Gastrocnemius medialis (tissue), 4 donors: ENCODE measurements at regions of chr12 and their contacts with region 1.

Region 1: DNA sequence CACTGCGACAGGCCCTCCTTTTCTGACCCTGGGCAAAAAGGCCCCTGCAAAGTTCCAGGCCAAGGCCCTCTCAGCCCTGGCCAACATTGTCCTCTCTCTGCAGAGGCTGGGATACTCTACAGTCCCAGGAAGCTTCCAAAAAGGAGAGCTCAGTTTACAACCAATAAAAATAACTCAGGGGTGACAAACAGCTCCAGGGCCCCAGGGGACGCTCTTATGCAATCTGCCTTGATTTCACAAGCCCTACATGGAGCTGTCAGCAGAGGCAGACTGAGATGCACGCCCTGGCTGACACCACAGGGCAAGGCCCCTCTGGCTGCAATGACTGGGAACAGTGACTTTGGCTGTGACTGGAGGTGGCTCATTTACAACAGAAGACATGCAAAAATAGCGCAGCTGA is 129.0 kb upstream of the MED13L start:
- DNase-seq: peak; percentile 98 to 99
- ATAC-seq: peak; percentile 94 to 99
- H3K4me3 ChIP-seq: no peak overlapping the region
- H3K27ac ChIP-seq: peak overlapping the region; percentile 62 to 73 (median 68)
- H3K4me1 ChIP-seq: peaks cover 17 to 24% of the 10 kb centered on the region in 2 donors
- H3K27me3 ChIP-seq: no peaks in the 10 kb centered on the region
- CTCF ChIP-seq: peak in 2 of 5 experiments; percentile 37 to 39
- POLR2A ChIP-seq: peak in 1 of 2 donors; percentile 30

Region 2: GRCh38 chr12:115998119-115998633 is 408.3 kb before region 1 on chr12:
- in situ Hi-C with region 1: loop called in 1 of 4 experiments (anchors 25 kb)
- intact Hi-C with region 1: no loop called
- DNase-seq: no peak
- ATAC-seq: peak; percentile 51 to 62
- H3K4me3 ChIP-seq: no peak overlapping the region
- H3K27ac ChIP-seq: peak overlapping the region; percentile 37 to 51 (median 44)
- H3K4me1 ChIP-seq: peaks cover 24 to 25% of the 10 kb centered on the region in 2 donors
- H3K27me3 ChIP-seq: no peaks in the 10 kb centered on the region
- CTCF ChIP-seq: peak; percentile 70 to 85 (median 78)
- POLR2A ChIP-seq: no peak

Region 3: DNA sequence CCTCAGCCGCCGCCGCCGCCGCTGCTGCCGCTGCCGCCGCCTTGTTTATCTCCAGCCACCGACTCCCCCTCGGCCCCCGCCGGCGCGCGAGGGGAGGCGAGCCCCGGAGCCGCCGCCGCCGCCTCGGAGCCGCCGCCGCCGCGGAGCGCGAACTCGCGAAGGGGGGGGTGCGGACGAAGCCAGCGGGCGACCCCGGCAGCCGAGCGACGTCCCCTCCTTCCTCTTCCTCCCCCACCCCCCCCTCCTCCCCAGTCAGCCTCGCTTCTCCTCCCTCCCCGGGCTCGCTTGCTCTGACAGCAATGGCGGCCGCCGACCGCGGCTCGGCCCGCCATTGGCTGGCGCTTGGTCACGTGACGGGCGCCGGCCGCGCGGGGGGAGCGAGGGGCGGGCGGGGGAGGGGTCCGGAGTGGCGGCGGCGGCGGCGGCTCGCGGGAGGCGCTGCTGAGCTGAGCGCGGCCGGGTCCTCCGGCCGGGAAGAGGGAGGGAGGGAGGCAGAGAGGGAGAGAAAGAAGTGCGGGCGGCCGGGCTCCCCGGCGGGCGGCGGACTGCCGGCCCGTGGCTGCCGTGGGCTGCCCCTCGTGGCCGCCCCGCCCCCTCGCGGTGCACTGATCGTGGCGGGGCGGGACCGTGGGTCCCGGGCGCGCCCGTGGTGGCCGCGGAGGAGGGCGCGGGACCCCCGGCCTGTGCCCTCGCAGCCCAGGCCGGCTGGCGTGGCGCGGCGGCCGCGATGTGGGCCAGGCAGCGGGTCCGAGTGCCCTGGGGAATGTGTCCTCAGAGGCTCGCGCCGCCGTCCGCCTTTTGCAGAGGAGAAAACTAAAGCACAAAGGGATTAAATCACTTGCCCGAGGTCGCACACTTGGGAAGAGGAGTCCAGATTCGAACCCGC is 128.9 kb before region 1 on chr12 and contains the start of gene MED13L:
- in situ Hi-C with region 1: no loop called
- intact Hi-C with region 1: loop called (anchors 1 kb)
- DNase-seq: peak; percentile 80 to 88
- ATAC-seq: peak; percentile 85 to 86
- H3K4me3 ChIP-seq: peak within 1 kb of the TSS; percentile 69 to 95 (median 88)
- H3K27ac ChIP-seq: peak within 1 kb of the TSS; percentile 87 to 99 (median 96)
- H3K4me1 ChIP-seq: peaks cover 28 to 37% of the 10 kb centered on the region in 2 donors
- H3K27me3 ChIP-seq: no peaks in the 10 kb centered on the region
- CTCF ChIP-seq: peak in 3 of 5 experiments; percentile 30 to 73 (median 52)
- POLR2A ChIP-seq: peak; percentile 83 to 86
- total RNA-seq, gene MED13L: 59.5 to 92.6 (median 74.1) TPM

Region 4: DNA sequence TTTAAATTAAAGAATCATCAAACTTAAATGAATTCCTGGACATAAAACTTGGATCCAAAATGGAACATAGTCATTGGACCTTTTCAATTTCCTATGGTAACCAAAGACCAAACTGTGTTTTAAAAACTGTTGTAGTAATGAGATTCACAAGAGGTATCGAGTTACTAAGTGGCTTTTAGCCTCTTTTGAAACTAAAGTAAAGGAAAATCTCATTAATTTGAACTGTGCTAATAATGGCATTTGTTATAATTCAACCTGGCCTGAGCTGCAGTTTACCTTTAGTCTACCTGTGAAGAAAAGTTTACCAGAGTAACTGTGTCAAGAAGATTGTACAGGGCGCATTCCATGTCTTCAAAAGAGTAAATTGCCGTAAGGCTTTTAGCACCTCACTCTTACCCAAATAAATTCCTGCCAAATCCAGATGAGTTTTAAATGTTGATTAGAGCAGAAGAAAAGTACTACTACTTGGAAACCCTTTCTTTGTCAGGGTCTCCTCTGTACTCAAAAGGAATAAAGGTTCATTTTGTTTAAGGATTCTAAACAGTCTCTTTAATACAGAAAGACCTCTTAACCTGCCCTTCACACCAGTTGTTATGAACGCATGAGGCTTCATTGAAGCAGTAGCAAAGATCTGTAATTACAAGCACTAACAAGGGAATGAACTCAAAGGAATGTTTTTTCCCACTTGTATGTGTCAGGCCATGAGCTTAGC is 111.9 kb before region 1 on chr12:
- in situ Hi-C with region 1: no loop called
- intact Hi-C with region 1: no loop called
- DNase-seq: no peak
- ATAC-seq: no peak
- H3K4me3 ChIP-seq: no peak overlapping the region
- H3K27ac ChIP-seq: no peak overlapping the region
- H3K4me1 ChIP-seq: no peaks in the 10 kb centered on the region
- H3K27me3 ChIP-seq: no peaks in the 10 kb centered on the region
- CTCF ChIP-seq: no peak
- POLR2A ChIP-seq: no peak

Region 5: GRCh38 chr12:116358893-116359761 is 47.4 kb before region 1 on chr12:
- in situ Hi-C with region 1: no loop called
- intact Hi-C with region 1: loop called (anchors 1 kb)
- DNase-seq: peak; percentile 84 to 91
- ATAC-seq: peak; percentile 89 to 90
- H3K4me3 ChIP-seq: peak overlapping the region in 1 of 4 donors; percentile 22
- H3K27ac ChIP-seq: peak overlapping the region; percentile 69 to 80 (median 76)
- H3K4me1 ChIP-seq: peaks cover 23 to 30% of the 10 kb centered on the region in 2 donors
- H3K27me3 ChIP-seq: no peaks in the 10 kb centered on the region
- CTCF ChIP-seq: no peak
- POLR2A ChIP-seq: no peak

Region 6: GRCh38 chr12:116382686-116383531 is 23.6 kb before region 1 on chr12:
- in situ Hi-C with region 1: no loop called
- intact Hi-C with region 1: no loop called
- DNase-seq: peak; percentile 18 to 60
- ATAC-seq: peak; percentile 68 to 69
- H3K4me3 ChIP-seq: no peak overlapping the region
- H3K27ac ChIP-seq: no peak overlapping the region
- H3K4me1 ChIP-seq: peaks cover 0 to 3% of the 10 kb centered on the region in 2 donors
- H3K27me3 ChIP-seq: no peaks in the 10 kb centered on the region
- CTCF ChIP-seq: no peak
- POLR2A ChIP-seq: no peak